Transverse colon (tissue), 4 donors: ENCODE measurements at regions of chr17 and their contacts with region 1.

Region 1: GRCh38 chr17:76467366-76467765 is at the start of gene AANAT:
- DNase-seq: no peak
- H3K4me3 ChIP-seq: no peak within 1 kb of the TSS
- H3K27ac ChIP-seq: no peak within 1 kb of the TSS
- H3K4me1 ChIP-seq: peaks cover 0 to 4% (median 0%) of the 10 kb centered on the region in 4 donors
- H3K27me3 ChIP-seq: no peaks in the 10 kb centered on the region
- CTCF ChIP-seq: no peak
- EP300 ChIP-seq: no peak
- POLR2A ChIP-seq: no peak
- total RNA-seq, gene AANAT: not detected

Region 2: GRCh38 chr17:76506408-76507349 is 39.3 kb after region 1 on chr17:
- in situ Hi-C with region 1: loop called (anchors 5 to 10 kb)
- intact Hi-C with region 1: loop called (anchors 1 kb)
- DNase-seq: peak; percentile 90
- H3K4me3 ChIP-seq: no peak overlapping the region
- H3K27ac ChIP-seq: no peak overlapping the region
- H3K4me1 ChIP-seq: peaks cover 3 to 13% (median 6%) of the 10 kb centered on the region in 4 donors
- H3K27me3 ChIP-seq: peaks cover 22% of the 10 kb centered on the region
- CTCF ChIP-seq: peak; percentile 93 to 97 (median 95)
- EP300 ChIP-seq: no peak
- POLR2A ChIP-seq: no peak

Region 3: DNA sequence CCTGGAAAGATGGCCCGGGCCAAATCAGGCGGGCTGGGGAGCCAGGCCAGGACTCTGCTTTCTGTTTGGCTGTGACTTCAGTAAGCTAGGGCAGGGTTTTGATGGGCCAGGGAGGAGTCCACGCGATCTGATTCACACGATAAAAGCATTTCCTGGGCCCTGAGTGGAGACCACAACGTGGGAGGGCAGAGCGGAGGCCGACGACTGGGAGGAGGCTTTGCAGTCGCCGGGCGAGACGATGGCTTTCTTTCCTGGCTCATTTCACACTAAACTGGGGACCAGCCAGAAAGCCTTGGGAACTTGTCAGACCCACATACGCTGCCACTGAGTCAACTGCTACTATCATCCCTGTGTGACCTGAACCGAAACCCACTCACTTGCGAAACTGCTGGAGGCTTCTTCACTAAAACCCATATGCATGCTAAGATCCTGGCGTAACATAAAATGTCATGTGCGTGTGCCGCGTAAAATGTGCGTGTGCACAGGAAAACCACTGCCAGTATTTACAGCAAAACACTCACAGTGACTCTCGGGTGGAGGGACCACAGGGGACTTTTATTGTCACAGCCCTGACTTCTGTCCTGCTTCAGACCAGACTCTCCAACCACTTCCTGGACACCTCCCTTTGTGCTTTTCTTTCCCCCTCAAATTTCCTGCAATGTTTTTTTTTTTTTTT is 48.0 kb after region 1 on chr17:
- in situ Hi-C with region 1: loop called in 2 of 4 experiments (anchors 10 kb)
- intact Hi-C with region 1: no loop called
- DNase-seq: peak; percentile 72
- H3K4me3 ChIP-seq: no peak overlapping the region
- H3K27ac ChIP-seq: peak overlapping the region; percentile 68 to 79 (median 75)
- H3K4me1 ChIP-seq: peaks cover 0 to 9% (median 4%) of the 10 kb centered on the region in 4 donors
- H3K27me3 ChIP-seq: no peaks in the 10 kb centered on the region
- CTCF ChIP-seq: no peak
- EP300 ChIP-seq: peak; percentile 41
- POLR2A ChIP-seq: peak; percentile 43